Naive thymus-derived CD4-positive, alpha-beta T cell (primary cell): ENCODE measurements at regions of chr17 and their contacts with region 1.

Region 1: DNA sequence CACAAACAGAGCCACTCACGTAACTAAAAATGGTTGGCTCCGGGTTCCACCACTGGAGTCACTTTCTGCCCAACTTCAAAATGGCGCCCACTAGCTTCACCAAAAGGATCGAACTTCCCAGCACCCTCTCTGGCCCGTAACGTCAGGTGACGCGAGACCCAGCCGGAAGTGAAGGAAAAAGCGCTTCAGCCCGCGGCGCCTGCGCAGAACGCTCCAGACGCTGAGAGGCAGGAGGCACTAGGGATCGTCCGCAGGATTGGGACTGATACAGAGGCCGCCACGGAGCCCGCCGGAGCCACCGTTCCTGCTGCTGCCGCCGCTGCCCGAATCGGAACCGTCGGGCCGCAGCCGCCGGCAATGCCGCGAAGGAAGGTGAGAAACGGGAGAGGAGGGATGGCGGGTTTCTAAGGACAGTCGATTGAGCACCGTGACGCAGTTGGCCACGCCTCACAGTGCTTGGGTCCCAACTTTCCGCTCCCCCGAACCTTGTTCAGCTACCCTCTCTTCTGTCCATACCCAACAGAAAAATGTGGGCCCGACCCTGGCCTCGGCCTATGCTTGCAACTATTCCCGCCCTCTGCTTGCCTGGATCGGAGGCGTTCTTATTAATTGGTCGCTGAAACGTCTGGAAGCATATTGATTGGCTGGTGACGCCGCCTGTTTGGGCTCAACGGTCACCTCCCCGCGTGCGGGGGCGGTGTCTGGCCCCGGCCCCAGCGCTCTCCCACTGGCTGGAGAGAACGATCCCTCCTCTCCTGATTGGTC is at the start of gene KAT7:
- DNase-seq: peak; percentile 90 to 99 (median 99)
- ATAC-seq: peak; percentile 90
- H3K4me3 ChIP-seq: peak within 1 kb of the TSS; percentile 98
- H3K4me3 Mint-ChIP-seq: peak within 1 kb of the TSS; percentile 92 to 99 (median 96)
- H3K27ac ChIP-seq: peak within 1 kb of the TSS; percentile 98
- H3K27ac Mint-ChIP-seq: peak within 1 kb of the TSS; percentile 91 to 99 (median 98)
- H3K4me1 ChIP-seq: peaks cover 17 to 30% of the 10 kb centered on the region in 2 donors
- H3K4me1 Mint-ChIP-seq: peaks cover 39 to 62% (median 58%) of the 10 kb centered on the region in 7 donors
- H3K27me3 ChIP-seq: no peaks in the 10 kb centered on the region
- H3K27me3 Mint-ChIP-seq: peaks cover 0 to 8% (median 0%) of the 10 kb centered on the region in 5 donors
- total RNA-seq, gene KAT7: 85.6 to 195 (median 132) TPM

Region 2: DNA sequence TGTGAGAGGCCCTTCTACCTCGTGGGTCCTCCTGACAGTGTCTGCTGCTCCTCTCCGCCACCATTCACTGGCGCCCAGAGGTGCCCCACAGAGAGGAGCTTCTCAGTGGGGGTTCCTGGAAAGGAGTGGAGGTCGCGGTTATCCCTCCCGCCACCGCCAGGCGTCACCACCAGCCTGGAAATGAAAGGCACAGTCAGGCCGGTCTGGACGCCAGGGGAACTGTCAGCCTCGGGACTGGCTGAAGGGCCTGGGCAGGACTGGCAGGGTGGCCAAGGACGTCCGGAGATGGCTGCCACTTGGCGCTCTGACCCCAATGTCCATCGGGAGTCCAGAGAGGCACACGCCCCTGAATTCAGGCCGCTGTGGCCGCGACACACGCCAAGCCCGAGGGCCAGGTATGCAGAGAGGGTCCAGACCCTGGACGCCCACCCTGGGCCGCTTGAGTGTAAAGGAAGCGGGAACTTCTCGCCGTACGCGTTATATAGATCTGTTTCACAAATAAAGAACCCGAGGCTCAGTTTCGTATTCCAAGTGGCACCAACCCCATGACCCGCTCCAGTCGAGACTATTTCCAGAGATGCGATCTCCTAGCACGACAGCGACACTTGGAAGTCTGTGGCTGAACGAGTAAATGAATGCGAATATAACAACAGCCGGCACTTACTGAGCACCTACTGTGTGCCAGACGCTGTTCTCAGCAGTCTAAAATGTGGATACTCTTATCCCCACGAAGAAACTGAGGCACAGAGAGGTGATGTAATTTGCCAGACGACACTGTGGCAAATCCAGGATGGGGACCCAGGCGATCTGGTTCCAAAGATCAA is 220.6 kb before region 1 on chr17:
- CTCF ChIA-PET with region 1: no interaction called
- POLR2A ChIA-PET with region 1: interaction called, 3 read pairs
- intact Hi-C with region 1: loop called (anchors 2 kb)
- DNase-seq: peak; percentile 50 to 88 (median 72)
- ATAC-seq: peak; percentile 64
- H3K4me3 ChIP-seq: peak overlapping the region; percentile 15
- H3K4me3 Mint-ChIP-seq: peak overlapping the region; percentile 53 to 80 (median 70)
- H3K27ac ChIP-seq: no peak overlapping the region
- H3K27ac Mint-ChIP-seq: peak overlapping the region in 1 of 9 donors; percentile 7
- H3K4me1 ChIP-seq: peaks cover 6 to 7% of the 10 kb centered on the region in 2 donors
- H3K4me1 Mint-ChIP-seq: peaks cover 0 to 28% (median 15%) of the 10 kb centered on the region in 7 donors
- H3K27me3 ChIP-seq: no peaks in the 10 kb centered on the region
- H3K27me3 Mint-ChIP-seq: peaks cover under 1 to 38% (median 4%) of the 10 kb centered on the region in 5 donors

Region 3: GRCh38 chr17:49723423-49723822 is 65.2 kb before region 1 on chr17:
- CTCF ChIA-PET with region 1: no interaction called
- POLR2A ChIA-PET with region 1: no interaction called
- intact Hi-C with region 1: no loop called
- DNase-seq: no peak
- ATAC-seq: no peak
- H3K4me3 ChIP-seq: no peak overlapping the region
- H3K4me3 Mint-ChIP-seq: peak overlapping the region in 1 of 10 donors; percentile 7
- H3K27ac ChIP-seq: peak overlapping the region; percentile 50
- H3K27ac Mint-ChIP-seq: peak overlapping the region in 8 of 9 donors; percentile 62 to 86 (median 74)
- H3K4me1 ChIP-seq: peaks cover under 1 to 15% of the 10 kb centered on the region in 2 donors
- H3K4me1 Mint-ChIP-seq: peaks cover 15 to 42% (median 32%) of the 10 kb centered on the region in 7 donors
- H3K27me3 ChIP-seq: no peaks in the 10 kb centered on the region
- H3K27me3 Mint-ChIP-seq: no peaks in the 10 kb centered on the region

Region 4: GRCh38 chr17:49739641-49740271 is 48.9 kb before region 1 on chr17:
- CTCF ChIA-PET with region 1: interaction called, 3 read pairs
- POLR2A ChIA-PET with region 1: interaction called, 22 read pairs
- intact Hi-C with region 1: loop called (anchors 1 kb)
- DNase-seq: peak; percentile 69 to 99 (median 98)
- ATAC-seq: peak; percentile 99
- H3K4me3 ChIP-seq: peak overlapping the region; percentile 67
- H3K4me3 Mint-ChIP-seq: peak overlapping the region; percentile 80 to 95 (median 90)
- H3K27ac ChIP-seq: peak overlapping the region; percentile 96
- H3K27ac Mint-ChIP-seq: peak overlapping the region; percentile 97 to 100 (median 99)
- H3K4me1 ChIP-seq: peaks cover 77 to 83% of the 10 kb centered on the region in 2 donors
- H3K4me1 Mint-ChIP-seq: peaks cover 62 to 97% (median 79%) of the 10 kb centered on the region in 7 donors
- H3K27me3 ChIP-seq: no peaks in the 10 kb centered on the region
- H3K27me3 Mint-ChIP-seq: no peaks in the 10 kb centered on the region

Region 5: DNA sequence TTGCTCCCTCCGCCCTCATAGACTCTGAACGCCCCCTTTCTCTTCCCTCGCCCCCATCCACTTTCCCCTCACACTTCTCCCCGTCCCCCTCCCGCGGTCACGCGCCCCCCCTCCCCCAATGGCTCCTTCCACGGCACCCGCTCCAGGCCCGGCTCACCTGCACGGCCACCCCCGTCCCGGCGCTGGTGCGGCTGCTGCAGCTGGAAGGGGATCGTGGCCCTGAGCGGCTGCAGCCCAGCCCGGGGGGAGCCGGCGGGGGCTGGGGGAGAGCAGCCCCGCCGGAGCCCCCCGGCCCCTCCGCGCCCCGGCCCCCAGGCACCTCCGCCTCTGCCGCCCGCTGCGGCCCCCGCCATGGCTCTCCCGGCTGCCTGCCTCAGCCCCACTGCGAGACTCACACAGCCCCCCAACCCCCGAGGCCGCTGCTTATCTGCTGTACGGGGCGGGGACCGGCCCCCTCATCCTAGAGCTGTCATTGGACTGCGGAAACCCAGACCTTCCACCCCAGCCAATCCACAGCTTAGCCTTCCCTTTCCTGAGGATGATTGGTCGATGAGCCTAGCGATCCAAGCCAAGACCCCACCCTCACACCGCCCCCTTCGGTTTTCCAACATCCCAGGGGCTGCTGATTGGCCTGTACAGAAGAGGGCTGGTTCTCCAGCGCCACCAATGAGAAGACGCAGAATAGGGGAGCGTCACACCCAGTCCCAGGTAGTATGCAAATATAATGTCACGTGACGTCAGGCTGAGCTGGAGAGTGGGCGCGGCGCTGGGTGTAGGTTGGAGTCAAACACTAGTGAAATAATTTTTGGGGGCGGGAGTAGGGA is 24.7 kb before region 1 on chr17 and contains the start of gene FAM117A:
- CTCF ChIA-PET with region 1: no interaction called
- POLR2A ChIA-PET with region 1: interaction called, 70 read pairs
- intact Hi-C with region 1: loop called (anchors 1 kb)
- DNase-seq: peak; percentile 72 to 99 (median 98)
- ATAC-seq: peak; percentile 93
- H3K4me3 ChIP-seq: peak within 1 kb of the TSS; percentile 82
- H3K4me3 Mint-ChIP-seq: peak within 1 kb of the TSS; percentile 92 to 99 (median 96)
- H3K27ac ChIP-seq: peak within 1 kb of the TSS; percentile 65
- H3K27ac Mint-ChIP-seq: peak within 1 kb of the TSS; percentile 62 to 96 (median 93)
- H3K4me1 ChIP-seq: peaks cover 32 to 36% of the 10 kb centered on the region in 2 donors
- H3K4me1 Mint-ChIP-seq: peaks cover 35 to 52% (median 51%) of the 10 kb centered on the region in 7 donors
- H3K27me3 ChIP-seq: no peaks in the 10 kb centered on the region
- H3K27me3 Mint-ChIP-seq: peaks cover 0 to 35% (median 0%) of the 10 kb centered on the region in 5 donors
- total RNA-seq, gene FAM117A: 31.8 to 99.1 (median 58.5) TPM

Region 6: DNA sequence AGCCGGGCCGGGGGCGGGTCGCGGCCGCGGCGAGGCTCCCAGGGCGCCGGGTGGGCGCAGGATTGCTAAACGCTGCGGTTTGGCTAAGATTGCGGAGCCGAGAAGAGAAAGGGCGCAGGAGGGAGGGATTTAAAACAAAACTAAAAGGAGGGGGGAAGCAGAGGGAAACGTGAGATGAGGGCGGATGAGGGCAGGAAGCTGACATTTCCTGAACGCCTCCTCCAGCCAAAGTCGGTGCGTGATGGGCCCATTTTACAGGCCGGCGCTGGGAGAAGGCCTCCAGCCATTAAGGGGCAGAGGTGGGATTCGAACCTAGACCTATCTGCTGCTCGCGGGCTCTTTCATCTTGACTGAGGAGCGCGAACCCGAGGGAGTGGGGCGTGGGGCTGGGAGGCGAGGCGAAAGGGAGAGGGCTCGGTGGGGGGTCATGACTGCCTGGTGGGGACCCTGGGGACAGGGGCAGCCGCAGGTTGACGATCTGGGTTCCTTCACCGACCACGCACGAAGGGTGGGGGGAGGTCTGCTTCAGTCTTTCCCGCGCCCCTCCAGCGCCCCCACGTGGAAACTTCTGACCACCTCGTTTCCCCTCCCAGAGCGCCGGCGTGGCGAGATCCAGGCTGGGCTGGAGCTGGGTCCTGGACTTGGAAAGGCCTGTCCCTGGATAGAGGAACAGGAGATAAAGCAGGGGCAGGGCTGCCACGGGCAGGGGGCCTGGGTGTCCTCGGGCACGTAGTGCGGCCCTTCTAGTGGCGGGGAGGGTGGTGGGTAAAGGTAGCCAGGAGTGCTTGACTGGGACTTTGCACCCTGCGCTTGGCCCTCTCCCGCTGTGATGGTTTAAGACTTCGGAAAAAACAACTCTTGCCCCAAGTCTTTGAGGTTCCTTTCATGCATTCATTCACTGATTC is 63.0 kb after region 1 on chr17:
- CTCF ChIA-PET with region 1: interaction called, 4 read pairs
- POLR2A ChIA-PET with region 1: interaction called, 3 read pairs
- intact Hi-C with region 1: loop called (anchors 1 to 2 kb)
- DNase-seq: peak; percentile 57 to 75 (median 67)
- ATAC-seq: peak; percentile 81
- H3K4me3 ChIP-seq: peak overlapping the region; percentile 67
- H3K4me3 Mint-ChIP-seq: peak overlapping the region; percentile 89 to 98 (median 94)
- H3K27ac ChIP-seq: peak overlapping the region; percentile 81
- H3K27ac Mint-ChIP-seq: peak overlapping the region; percentile 83 to 97 (median 95)
- H3K4me1 ChIP-seq: peaks cover 13 to 14% of the 10 kb centered on the region in 2 donors
- H3K4me1 Mint-ChIP-seq: peaks cover 10 to 30% (median 19%) of the 10 kb centered on the region in 7 donors
- H3K27me3 ChIP-seq: no peaks in the 10 kb centered on the region
- H3K27me3 Mint-ChIP-seq: peaks cover 0 to 9% (median 0%) of the 10 kb centered on the region in 5 donors